ENCODE measurements at regions of chr16 and their contacts with region 1.

Region 1: GRCh38 chr16:56700195-56700594 is 17.9 kb downstream of the MT1X start:
- DNase-seq: no peak
- H3K4me3 ChIP-seq: no peak overlapping the region
- H3K4me3 Mint-ChIP-seq: no peak overlapping the region
- H3K27ac ChIP-seq: no peak overlapping the region
- H3K27ac Mint-ChIP-seq: peak overlapping the region in 2 of 8 donors; percentile 9 to 13
- H3K4me1 ChIP-seq: peaks cover 11% of the 10 kb centered on the region
- H3K4me1 Mint-ChIP-seq: peaks cover 6 to 11% (median 10%) of the 10 kb centered on the region in 3 donors
- H3K27me3 ChIP-seq: no peaks in the 10 kb centered on the region
- H3K27me3 Mint-ChIP-seq: no peaks in the 10 kb centered on the region

Region 2: DNA sequence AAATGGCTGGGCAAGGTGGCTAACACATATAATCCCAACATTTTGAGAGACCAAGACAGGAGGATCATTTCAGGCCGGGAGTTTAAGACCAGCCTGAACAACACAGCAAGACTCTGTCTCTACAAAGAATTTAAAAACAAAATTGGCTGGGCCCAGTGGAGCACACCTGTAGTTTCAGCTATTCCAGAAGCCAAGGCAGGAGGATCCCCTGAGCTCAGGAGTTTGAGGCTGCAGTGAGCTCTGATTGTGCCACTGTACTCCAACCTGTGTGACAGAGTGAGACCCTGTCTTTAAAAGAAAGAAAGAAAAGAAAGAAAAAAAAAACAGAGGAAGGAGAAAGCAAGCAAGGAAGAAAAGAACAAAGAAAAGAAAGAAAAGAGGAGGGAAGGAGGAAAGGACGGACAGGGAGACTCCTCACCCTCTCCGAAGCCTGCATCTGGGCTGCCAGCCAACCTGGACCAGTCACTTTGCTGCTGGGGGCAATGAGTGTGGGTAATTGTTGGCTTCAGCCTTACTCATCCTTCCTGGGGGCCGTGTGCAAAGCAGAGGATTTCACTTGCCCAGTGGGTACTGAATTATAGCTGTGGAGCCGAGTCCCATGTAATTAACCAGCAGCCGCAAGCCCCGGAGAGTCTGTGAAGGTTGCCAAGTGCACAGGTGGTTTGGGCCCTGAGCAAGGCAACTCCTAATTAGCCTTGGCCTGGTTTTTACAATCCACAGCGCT is 142.0 kb before region 1 on chr16:
- CTCF ChIA-PET with region 1: no interaction called
- POLR2A ChIA-PET with region 1: interaction called, 11 read pairs
- DNase-seq: no peak
- H3K4me3 ChIP-seq: no peak overlapping the region
- H3K4me3 Mint-ChIP-seq: no peak overlapping the region
- H3K27ac ChIP-seq: no peak overlapping the region
- H3K27ac Mint-ChIP-seq: peak overlapping the region in 1 of 8 donors; percentile 47
- H3K4me1 ChIP-seq: no peaks in the 10 kb centered on the region
- H3K4me1 Mint-ChIP-seq: no peaks in the 10 kb centered on the region
- H3K27me3 ChIP-seq: no peaks in the 10 kb centered on the region
- H3K27me3 Mint-ChIP-seq: peaks cover 25 to 39% of the 10 kb centered on the region in 2 donors

Region 3: GRCh38 chr16:56600398-56600999 is 99.7 kb before region 1 on chr16:
- CTCF ChIA-PET with region 1: interaction called, 29 read pairs
- POLR2A ChIA-PET with region 1: interaction called, 4 read pairs
- DNase-seq: peak in 2 of 5 donors; percentile 31 to 60
- H3K4me3 ChIP-seq: no peak overlapping the region
- H3K4me3 Mint-ChIP-seq: no peak overlapping the region
- H3K27ac ChIP-seq: no peak overlapping the region
- H3K27ac Mint-ChIP-seq: no peak overlapping the region
- H3K4me1 ChIP-seq: no peaks in the 10 kb centered on the region
- H3K4me1 Mint-ChIP-seq: peaks cover 0 to 6% (median 5%) of the 10 kb centered on the region in 3 donors
- H3K27me3 ChIP-seq: no peaks in the 10 kb centered on the region
- H3K27me3 Mint-ChIP-seq: peaks cover 8 to 10% of the 10 kb centered on the region in 2 donors

Region 4: GRCh38 chr16:56643080-56643778 is 57.0 kb before region 1 on chr16:
- CTCF ChIA-PET with region 1: interaction called, 16 read pairs
- POLR2A ChIA-PET with region 1: no interaction called
- DNase-seq: peak; percentile 66 to 87 (median 74)
- H3K4me3 ChIP-seq: peak overlapping the region; percentile 40
- H3K4me3 Mint-ChIP-seq: peak overlapping the region; percentile 75 to 89 (median 81)
- H3K27ac ChIP-seq: no peak overlapping the region
- H3K27ac Mint-ChIP-seq: peak overlapping the region in 7 of 8 donors; percentile 46 to 92 (median 85)
- H3K4me1 ChIP-seq: peaks cover 16% of the 10 kb centered on the region
- H3K4me1 Mint-ChIP-seq: peaks cover 20 to 32% (median 26%) of the 10 kb centered on the region in 3 donors
- H3K27me3 ChIP-seq: peaks cover 17% of the 10 kb centered on the region
- H3K27me3 Mint-ChIP-seq: peaks cover 22 to 30% of the 10 kb centered on the region in 2 donors

Region 5: DNA sequence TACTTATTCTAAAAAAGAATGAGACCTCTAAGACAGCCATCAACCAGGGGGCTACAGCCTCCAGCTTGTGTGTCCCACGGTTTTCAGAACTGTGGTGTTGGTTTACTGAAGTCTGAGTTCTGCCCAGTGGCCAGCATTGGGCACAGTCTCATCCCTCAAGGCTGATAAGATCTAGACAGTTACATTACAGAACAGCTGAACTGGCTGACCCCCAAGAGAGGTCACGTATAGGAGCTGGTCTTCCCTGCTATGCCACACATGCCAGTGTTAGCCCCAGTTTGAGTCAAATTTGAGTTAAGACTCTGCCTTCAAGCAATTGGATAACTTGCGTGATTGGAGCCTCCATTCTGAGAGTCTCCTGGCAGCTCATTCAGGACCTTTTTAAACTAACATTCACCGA is 14.9 kb after region 1 on chr16:
- CTCF ChIA-PET with region 1: interaction called, 11 read pairs
- POLR2A ChIA-PET with region 1: no interaction called
- DNase-seq: no peak
- H3K4me3 ChIP-seq: no peak overlapping the region
- H3K4me3 Mint-ChIP-seq: no peak overlapping the region
- H3K27ac ChIP-seq: no peak overlapping the region
- H3K27ac Mint-ChIP-seq: no peak overlapping the region
- H3K4me1 ChIP-seq: peaks cover 3% of the 10 kb centered on the region
- H3K4me1 Mint-ChIP-seq: peaks cover 15 to 27% (median 25%) of the 10 kb centered on the region in 3 donors
- H3K27me3 ChIP-seq: no peaks in the 10 kb centered on the region
- H3K27me3 Mint-ChIP-seq: no peaks in the 10 kb centered on the region

Region 6: GRCh38 chr16:56789360-56789759 is 89.2 kb after region 1 on chr16:
- CTCF ChIA-PET with region 1: no interaction called
- POLR2A ChIA-PET with region 1: no interaction called
- DNase-seq: peak in 2 of 5 donors; percentile 13 to 48
- H3K4me3 ChIP-seq: no peak overlapping the region
- H3K4me3 Mint-ChIP-seq: no peak overlapping the region
- H3K27ac ChIP-seq: no peak overlapping the region
- H3K27ac Mint-ChIP-seq: no peak overlapping the region
- H3K4me1 ChIP-seq: no peaks in the 10 kb centered on the region
- H3K4me1 Mint-ChIP-seq: peaks cover 4 to 6% (median 4%) of the 10 kb centered on the region in 3 donors
- H3K27me3 ChIP-seq: no peaks in the 10 kb centered on the region
- H3K27me3 Mint-ChIP-seq: no peaks in the 10 kb centered on the region